ENCODE measurements at regions of chr4 and their contacts with region 1.

Region 1: GRCh38 chr4:155376387-155377268 is at the start of gene MAP9:
- DNase-seq: peak; percentile 98
- ATAC-seq: peak; percentile 90
- H3K4me3 ChIP-seq: peak within 1 kb of the TSS; percentile 4 to 80 (median 75)
- H3K4me3 Mint-ChIP-seq: peak within 1 kb of the TSS; percentile 95
- H3K27ac ChIP-seq: peak within 1 kb of the TSS; percentile 78 to 91
- H3K27ac Mint-ChIP-seq: peak within 1 kb of the TSS; percentile 96
- H3K4me1 ChIP-seq: peaks cover 4 to 8% of the 10 kb centered on the region in 2 donors
- H3K4me1 Mint-ChIP-seq: peaks cover 15% of the 10 kb centered on the region
- H3K27me3 ChIP-seq: no peaks in the 10 kb centered on the region
- H3K27me3 Mint-ChIP-seq: no peaks in the 10 kb centered on the region
- CTCF ChIP-seq: no peak
- total RNA-seq, gene MAP9: 16.3 and 19.1 TPM in 2 replicates

Region 2: DNA sequence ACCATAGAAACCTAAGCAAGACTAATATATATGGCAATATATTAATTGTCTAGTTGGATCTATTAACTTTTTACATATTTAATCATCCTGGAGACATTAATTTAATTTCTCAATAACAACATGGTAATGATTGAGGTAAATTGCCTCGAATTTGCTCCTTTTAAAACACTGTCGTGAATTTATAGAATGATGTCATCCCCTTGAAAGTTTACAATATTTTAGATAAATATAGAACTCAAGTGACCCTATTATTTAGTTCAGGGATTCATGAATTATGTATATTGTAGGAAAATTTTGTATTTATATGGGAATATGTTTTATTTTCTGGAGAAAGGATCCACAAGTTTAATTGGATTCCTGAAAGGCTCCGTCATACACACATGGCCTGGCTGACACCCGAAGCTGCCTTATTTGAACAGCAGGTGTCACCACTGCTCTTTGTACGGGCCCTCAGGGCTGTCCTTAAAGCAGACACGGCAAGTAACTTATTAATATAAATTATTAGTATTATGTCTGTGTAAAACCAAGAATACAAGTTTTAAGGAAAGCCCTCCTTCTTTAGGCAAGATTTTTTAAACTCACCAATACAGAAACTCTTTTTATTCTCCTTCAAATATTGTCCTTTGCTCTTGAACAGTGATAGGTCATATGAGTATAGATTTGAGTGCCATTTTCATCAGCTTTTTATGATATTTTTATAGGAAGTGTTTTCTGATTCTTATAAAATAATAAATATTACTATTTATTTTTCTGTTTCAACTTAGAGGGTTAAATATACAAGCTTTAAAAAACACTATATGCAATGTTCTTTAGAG is 824.5 kb before region 1 on chr4:
- CTCF ChIA-PET with region 1: interaction called, 10 read pairs
- POLR2A ChIA-PET with region 1: interaction called, 4 read pairs
- intact Hi-C with region 1: loop called (anchors 1 kb)
- DNase-seq: peak; percentile 80
- ATAC-seq: peak; percentile 54
- H3K4me3 ChIP-seq: no peak overlapping the region
- H3K4me3 Mint-ChIP-seq: no peak overlapping the region
- H3K27ac ChIP-seq: no peak overlapping the region
- H3K27ac Mint-ChIP-seq: no peak overlapping the region
- H3K4me1 ChIP-seq: peaks cover 18% of the 10 kb centered on the region in 2 donors
- H3K4me1 Mint-ChIP-seq: peaks cover 21% of the 10 kb centered on the region
- H3K27me3 ChIP-seq: no peaks in the 10 kb centered on the region
- H3K27me3 Mint-ChIP-seq: no peaks in the 10 kb centered on the region
- CTCF ChIP-seq: peak; percentile 94

Region 3: DNA sequence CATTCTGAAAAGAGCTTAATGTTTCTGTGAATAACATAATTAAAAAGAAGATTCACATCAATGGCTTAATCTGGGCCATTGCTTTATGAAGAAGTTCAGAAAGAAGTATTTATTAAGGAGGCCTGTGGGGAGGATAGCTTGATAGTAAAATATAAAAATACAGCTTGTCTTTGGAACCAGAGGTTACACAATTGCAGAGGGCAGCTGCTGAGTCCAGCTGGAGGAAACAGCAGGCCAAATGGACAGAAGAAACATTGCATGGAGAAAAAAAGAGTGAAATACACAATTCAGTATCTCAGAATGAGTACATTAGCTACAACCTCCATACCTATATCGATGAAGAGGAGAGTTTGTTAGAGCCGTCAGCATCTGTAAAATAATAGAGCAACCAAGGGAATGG is 316.2 kb before region 1 on chr4:
- CTCF ChIA-PET with region 1: no interaction called
- POLR2A ChIA-PET with region 1: no interaction called
- intact Hi-C with region 1: no loop called
- DNase-seq: no peak
- ATAC-seq: no peak
- H3K4me3 ChIP-seq: no peak overlapping the region
- H3K4me3 Mint-ChIP-seq: no peak overlapping the region
- H3K27ac ChIP-seq: no peak overlapping the region
- H3K27ac Mint-ChIP-seq: no peak overlapping the region
- H3K4me1 ChIP-seq: no peaks in the 10 kb centered on the region
- H3K4me1 Mint-ChIP-seq: no peaks in the 10 kb centered on the region
- H3K27me3 ChIP-seq: no peaks in the 10 kb centered on the region
- H3K27me3 Mint-ChIP-seq: no peaks in the 10 kb centered on the region
- CTCF ChIP-seq: no peak

Region 4: GRCh38 chr4:155758481-155759404 is 382.1 kb after region 1 on chr4 and contains the start of gene GUCY1B1:
- CTCF ChIA-PET with region 1: no interaction called
- POLR2A ChIA-PET with region 1: no interaction called
- intact Hi-C with region 1: loop called (anchors 2 kb)
- DNase-seq: peak; percentile 91
- ATAC-seq: peak; percentile 97
- H3K4me3 ChIP-seq: peak within 1 kb of the TSS; percentile 53 to 67 (median 65)
- H3K4me3 Mint-ChIP-seq: peak within 1 kb of the TSS; percentile 82
- H3K27ac ChIP-seq: peak within 1 kb of the TSS in 1 of 2 donors; percentile 51
- H3K27ac Mint-ChIP-seq: peak within 1 kb of the TSS; percentile 75
- H3K4me1 ChIP-seq: peaks cover 3 to 11% of the 10 kb centered on the region in 2 donors
- H3K4me1 Mint-ChIP-seq: peaks cover 10% of the 10 kb centered on the region
- H3K27me3 ChIP-seq: peaks cover 0 to 5% (median 2%) of the 10 kb centered on the region in 4 experiments
- H3K27me3 Mint-ChIP-seq: peaks cover 24% of the 10 kb centered on the region
- CTCF ChIP-seq: no peak
- total RNA-seq, gene GUCY1B1: 0.10 and 0.19 TPM in 2 replicates

Region 5: GRCh38 chr4:156662921-156663320 is 1286.3 kb after region 1 on chr4:
- CTCF ChIA-PET with region 1: no interaction called
- POLR2A ChIA-PET with region 1: no interaction called
- intact Hi-C with region 1: no loop called
- DNase-seq: no peak
- ATAC-seq: no peak
- H3K4me3 ChIP-seq: no peak overlapping the region
- H3K4me3 Mint-ChIP-seq: no peak overlapping the region
- H3K27ac ChIP-seq: no peak overlapping the region
- H3K27ac Mint-ChIP-seq: no peak overlapping the region
- H3K4me1 ChIP-seq: no peaks in the 10 kb centered on the region
- H3K4me1 Mint-ChIP-seq: no peaks in the 10 kb centered on the region
- H3K27me3 ChIP-seq: no peaks in the 10 kb centered on the region
- H3K27me3 Mint-ChIP-seq: no peaks in the 10 kb centered on the region
- CTCF ChIP-seq: no peak

Measured in B cell (primary cell).